Activated naive CD4-positive, alpha-beta T cell treated with anti-CD3 and anti-CD28 coated beads for 36 hours (primary cell): ENCODE measurements at regions of chr6 and their contacts with region 1.

Region 1: GRCh38 chr6:138773177-138774091 is at the start of gene CCDC28A:
- DNase-seq: peak; percentile 97
- H3K4me3 Mint-ChIP-seq: peak within 1 kb of the TSS; percentile 98
- H3K27ac Mint-ChIP-seq: peak within 1 kb of the TSS; percentile 100
- H3K4me1 Mint-ChIP-seq: peaks cover 30% of the 10 kb centered on the region
- H3K27me3 Mint-ChIP-seq: no peaks in the 10 kb centered on the region
- total RNA-seq, gene CCDC28A: 18.9 to 19.2 TPM

Region 2: GRCh38 chr6:138654715-138655634 is 118.5 kb before region 1 on chr6:
- CTCF ChIA-PET with region 1: no interaction called
- intact Hi-C with region 1: loop called (anchors 1 kb)
- DNase-seq: peak; percentile 76
- H3K4me3 Mint-ChIP-seq: no peak overlapping the region
- H3K27ac Mint-ChIP-seq: peak overlapping the region; percentile 36
- H3K4me1 Mint-ChIP-seq: peaks cover 25% of the 10 kb centered on the region
- H3K27me3 Mint-ChIP-seq: peaks cover 28% of the 10 kb centered on the region

Region 3: GRCh38 chr6:138692058-138692977 is 81.1 kb before region 1 on chr6:
- CTCF ChIA-PET with region 1: interaction called, 8 read pairs
- intact Hi-C with region 1: loop called (anchors 2 kb)
- DNase-seq: peak; percentile 50
- H3K4me3 Mint-ChIP-seq: peak overlapping the region; percentile 79
- H3K27ac Mint-ChIP-seq: no peak overlapping the region
- H3K4me1 Mint-ChIP-seq: peaks cover 5% of the 10 kb centered on the region
- H3K27me3 Mint-ChIP-seq: peaks cover 32% of the 10 kb centered on the region

Region 4: DNA sequence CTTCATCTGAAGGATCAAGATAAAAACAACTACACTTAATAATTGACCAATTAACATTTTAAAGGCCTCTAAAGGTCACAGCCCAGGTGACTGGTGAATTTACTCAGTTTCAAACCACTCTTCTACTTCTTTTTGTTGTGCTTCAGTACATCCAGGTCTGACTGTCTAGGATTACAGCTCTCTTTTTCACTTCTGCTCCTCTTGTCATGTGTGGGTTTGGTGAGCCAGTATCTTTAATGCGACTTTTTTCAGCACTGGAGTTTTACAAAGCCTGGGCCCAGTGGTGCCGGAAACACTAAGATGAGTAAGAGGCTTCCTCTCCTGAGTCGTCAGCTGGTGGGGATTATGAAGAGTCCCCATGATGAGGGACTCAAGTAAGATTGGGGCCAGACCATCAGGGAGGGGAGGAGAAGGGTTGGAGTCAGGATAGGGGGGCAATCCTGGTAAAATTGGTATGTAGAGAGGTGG is 388.4 kb after region 1 on chr6:
- CTCF ChIA-PET with region 1: no interaction called
- intact Hi-C with region 1: loop called (anchors 5 kb)
- DNase-seq: peak; percentile 88
- H3K4me3 Mint-ChIP-seq: peak overlapping the region; percentile 39
- H3K27ac Mint-ChIP-seq: peak overlapping the region; percentile 92
- H3K4me1 Mint-ChIP-seq: peaks cover 91% of the 10 kb centered on the region
- H3K27me3 Mint-ChIP-seq: no peaks in the 10 kb centered on the region